Activated naive CD4-positive, alpha-beta T cell treated with anti-CD3 and anti-CD28 coated beads for 36 hours (primary cell): ENCODE measurements at regions of chr7 and their contacts with region 1.

Region 1: GRCh38 chr7:38300175-38300574 is 26.7 kb upstream of the TARP start:
- DNase-seq: no peak
- H3K4me3 Mint-ChIP-seq: peak overlapping the region; percentile 75
- H3K27ac Mint-ChIP-seq: peak overlapping the region; percentile 76
- H3K4me1 Mint-ChIP-seq: peaks cover 3% of the 10 kb centered on the region
- H3K27me3 Mint-ChIP-seq: no peaks in the 10 kb centered on the region

Region 2: DNA sequence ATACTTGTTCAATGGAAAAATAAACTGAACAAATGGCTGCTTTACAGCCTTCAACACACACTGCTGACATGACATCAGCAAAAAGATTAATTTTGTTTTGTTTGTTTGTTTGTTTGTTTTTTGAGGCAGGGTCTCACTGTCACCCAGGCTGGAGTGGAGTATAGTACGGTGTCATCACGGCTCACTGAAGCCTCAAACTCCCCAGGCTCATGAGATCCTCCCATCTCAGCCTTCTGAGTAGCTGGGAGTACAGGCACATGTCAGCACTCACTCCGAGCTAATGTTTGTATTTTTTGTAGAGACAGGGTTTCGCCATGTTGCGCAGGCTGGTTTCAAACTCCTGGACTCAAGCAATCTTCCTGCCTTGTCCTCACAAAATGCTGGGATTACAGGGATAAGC is 37.6 kb before region 1 on chr7:
- CTCF ChIA-PET with region 1: no interaction called
- intact Hi-C with region 1: loop called (anchors 5 kb)
- DNase-seq: no peak
- H3K4me3 Mint-ChIP-seq: no peak overlapping the region
- H3K27ac Mint-ChIP-seq: peak overlapping the region; percentile 56
- H3K4me1 Mint-ChIP-seq: no peaks in the 10 kb centered on the region
- H3K27me3 Mint-ChIP-seq: no peaks in the 10 kb centered on the region

Region 3: DNA sequence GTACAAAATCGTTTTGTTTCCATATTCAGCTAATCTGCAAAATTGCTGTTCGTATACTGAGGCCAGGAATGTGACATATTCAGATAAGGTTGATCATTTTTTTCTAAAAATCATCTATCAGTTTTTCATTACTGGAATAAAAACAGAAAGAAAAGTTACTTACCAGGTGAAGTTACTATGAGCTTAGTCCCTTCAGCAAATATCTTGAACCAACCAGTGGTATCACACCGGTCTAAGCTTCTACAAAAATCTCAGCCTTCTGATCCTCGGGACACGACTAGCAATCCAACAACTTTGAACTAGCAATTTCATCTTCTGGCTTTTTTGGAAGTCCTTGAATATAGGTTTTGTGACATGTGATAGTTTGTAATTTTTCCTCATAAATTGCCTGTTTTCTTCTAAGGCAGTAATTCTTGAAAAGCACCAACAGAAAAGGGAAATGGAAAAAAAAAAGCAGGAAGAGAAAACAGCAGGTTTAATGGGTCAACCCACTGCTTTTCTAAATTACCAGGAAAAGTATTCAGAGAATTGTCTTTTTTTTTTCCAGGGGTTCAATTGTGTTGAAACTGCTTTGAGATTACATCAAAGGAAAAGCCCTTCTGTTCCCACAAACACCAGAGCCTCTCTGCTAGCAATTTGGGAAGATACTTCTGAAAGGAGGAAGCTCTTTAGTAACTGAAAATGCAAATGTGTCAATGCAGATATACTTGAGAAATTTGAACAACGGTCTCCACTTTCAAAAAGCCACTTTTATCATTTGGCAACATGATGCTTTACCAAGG is 23.9 kb before region 1 on chr7:
- CTCF ChIA-PET with region 1: no interaction called
- intact Hi-C with region 1: loop called (anchors 1 kb)
- DNase-seq: no peak
- H3K4me3 Mint-ChIP-seq: peak overlapping the region; percentile 57
- H3K27ac Mint-ChIP-seq: no peak overlapping the region
- H3K4me1 Mint-ChIP-seq: no peaks in the 10 kb centered on the region
- H3K27me3 Mint-ChIP-seq: no peaks in the 10 kb centered on the region